Endothelial cell of umbilical vein (primary cell): ENCODE measurements at regions of chr16 and their contacts with region 1.

Region 1: DNA sequence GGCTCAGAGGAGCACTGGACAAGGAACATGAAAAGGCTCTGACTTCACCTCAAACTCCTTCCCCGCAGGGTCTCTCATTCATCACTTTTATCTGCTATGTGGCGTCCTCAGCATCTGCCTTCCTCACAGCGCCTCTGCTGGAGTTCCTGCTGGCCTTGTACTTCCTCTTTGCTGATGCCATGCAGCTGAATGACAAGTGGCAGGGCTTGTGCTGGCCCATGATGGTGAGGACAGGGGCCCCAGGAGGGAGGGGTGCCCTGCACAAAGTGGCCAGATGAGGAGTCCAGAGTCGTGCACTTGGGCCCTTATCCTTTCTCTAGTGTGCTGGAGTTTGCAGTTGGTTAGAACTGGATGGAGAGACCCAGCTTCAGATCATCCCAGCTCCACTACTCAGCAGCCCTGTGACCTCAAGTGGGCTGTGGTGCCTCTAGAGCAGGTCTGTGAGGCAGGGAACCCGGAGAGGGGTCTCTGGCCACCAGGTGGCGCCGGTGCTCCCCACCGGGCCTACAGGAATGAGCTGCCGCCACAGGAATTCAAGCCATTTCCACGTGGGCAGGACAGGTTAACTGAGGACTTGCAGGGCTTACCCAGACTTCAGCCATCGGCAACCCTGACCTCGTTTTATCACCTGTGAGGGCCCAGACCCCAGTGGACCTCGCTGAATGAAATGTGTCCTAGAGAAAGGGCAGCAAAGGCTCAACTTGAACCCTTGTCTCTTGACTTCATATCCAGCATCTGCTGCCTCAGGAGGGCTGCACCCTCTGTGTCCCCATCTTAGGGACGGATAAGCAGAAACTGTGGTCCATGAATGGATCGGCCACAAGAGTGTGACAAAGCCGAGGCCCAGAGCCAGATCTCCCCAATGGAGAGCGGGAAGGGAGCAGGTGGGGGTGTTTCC is 4.0 kb downstream of the CMTM3 start:
- DNase-seq: peak; percentile 77
- H3K4me3 ChIP-seq: no peak overlapping the region
- H3K27ac ChIP-seq: peak overlapping the region; percentile 28
- H3K4me1 ChIP-seq: peaks cover 17% of the 10 kb centered on the region
- H3K27me3 ChIP-seq: no peaks in the 10 kb centered on the region
- CTCF ChIP-seq: peak; percentile 99
- POLR2A ChIP-seq: no peak

Region 2: DNA sequence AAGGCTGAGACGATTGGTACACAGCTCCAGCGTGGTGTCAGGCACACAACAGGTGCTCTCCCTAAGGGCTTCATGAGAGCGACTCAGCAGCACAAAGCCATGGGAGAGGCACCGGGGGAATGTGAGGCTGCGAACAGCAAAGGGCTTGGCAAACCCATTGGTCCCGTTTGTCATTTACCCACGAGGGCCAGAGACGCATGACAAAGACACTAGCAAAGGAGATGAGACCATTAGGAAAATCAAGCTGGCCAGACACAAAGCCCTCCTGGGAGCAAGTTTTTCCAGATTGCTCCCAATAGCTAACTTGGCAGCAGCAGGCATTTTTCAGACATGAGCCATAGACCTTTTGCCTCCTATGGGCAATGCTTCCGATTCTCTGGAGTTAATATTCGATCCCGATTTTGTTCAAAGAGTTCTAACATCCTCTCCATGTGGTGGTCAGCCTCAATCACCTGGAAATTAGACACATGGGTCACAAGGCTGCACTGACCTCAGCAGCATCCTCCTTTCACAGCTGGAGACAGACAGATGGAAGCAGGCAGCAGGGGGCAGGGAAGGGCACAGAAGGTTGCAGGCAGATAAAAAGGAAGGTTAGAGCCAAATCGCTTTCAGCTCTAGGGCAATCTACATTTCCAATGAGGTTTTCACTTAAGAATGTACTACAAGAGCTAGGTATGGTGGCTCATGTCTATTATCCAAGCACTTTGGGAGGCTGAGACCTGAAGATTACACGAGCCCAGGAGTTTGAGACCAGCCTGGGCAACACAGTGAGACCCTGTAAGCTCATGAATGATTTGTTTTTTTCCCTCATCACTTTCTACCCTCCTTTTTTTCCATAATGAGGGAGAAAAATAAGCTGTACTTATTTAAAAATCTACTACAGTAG is 96.6 kb before region 1 on chr16:
- CTCF ChIA-PET with region 1: interaction called, 14 read pairs
- POLR2A ChIA-PET with region 1: no interaction called
- dilution Hi-C with region 1: no loop called
- intact Hi-C with region 1: loop called (anchors 1 kb)
- DNase-seq: peak; percentile 70
- H3K4me3 ChIP-seq: no peak overlapping the region
- H3K27ac ChIP-seq: peak overlapping the region; percentile 86
- H3K4me1 ChIP-seq: peaks cover 58% of the 10 kb centered on the region
- H3K27me3 ChIP-seq: no peaks in the 10 kb centered on the region
- CTCF ChIP-seq: no peak
- POLR2A ChIP-seq: no peak

Region 3: GRCh38 chr16:66562407-66562806 is 46.1 kb before region 1 on chr16:
- CTCF ChIA-PET with region 1: interaction called, 15 read pairs
- POLR2A ChIA-PET with region 1: no interaction called
- dilution Hi-C with region 1: no loop called
- intact Hi-C with region 1: loop called (anchors 1 kb)
- DNase-seq: no peak
- H3K4me3 ChIP-seq: no peak overlapping the region
- H3K27ac ChIP-seq: no peak overlapping the region
- H3K4me1 ChIP-seq: peaks cover 19% of the 10 kb centered on the region
- H3K27me3 ChIP-seq: no peaks in the 10 kb centered on the region
- CTCF ChIP-seq: no peak
- POLR2A ChIP-seq: no peak

Region 4: DNA sequence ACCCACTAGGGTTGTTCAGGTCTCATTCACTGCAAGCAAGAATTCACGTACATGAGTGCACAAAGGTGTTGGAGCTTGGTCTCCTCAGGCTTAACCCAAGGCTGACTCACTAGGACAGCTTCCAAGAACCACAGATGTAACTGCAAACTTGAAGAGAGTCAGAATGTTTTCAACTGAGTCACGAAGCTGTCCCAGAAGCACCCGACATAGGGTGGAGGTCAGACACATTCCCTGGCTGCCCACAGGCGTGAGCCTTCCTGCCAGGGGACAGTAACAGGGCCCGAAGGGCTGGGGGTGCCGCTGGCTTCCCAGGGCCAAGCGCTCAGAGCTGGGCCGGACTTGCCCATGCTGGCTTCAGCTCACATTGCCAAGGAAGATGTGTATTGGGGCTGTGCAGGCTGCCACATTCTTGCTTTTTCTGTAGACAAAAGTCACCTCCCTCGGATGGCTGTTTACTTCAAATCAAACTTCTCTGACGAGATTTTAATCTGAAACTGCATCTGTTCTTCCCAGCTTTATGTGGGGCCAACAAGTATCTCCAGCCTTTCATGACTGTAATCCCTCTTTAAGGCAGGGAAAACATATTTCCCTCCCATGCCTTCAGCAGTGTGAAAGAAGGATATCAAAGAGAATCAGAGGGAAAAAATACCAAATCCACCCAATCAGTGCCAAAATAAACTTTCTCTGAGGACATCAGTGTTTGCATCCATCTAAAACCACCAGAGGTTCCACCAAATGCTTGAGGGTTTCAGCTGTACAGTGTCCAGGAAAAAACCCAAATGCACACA is 10.3 kb after region 1 on chr16:
- CTCF ChIA-PET with region 1: interaction called, 52 read pairs
- POLR2A ChIA-PET with region 1: no interaction called
- dilution Hi-C with region 1: no loop called
- intact Hi-C with region 1: no loop called
- DNase-seq: peak; percentile 71
- H3K4me3 ChIP-seq: no peak overlapping the region
- H3K27ac ChIP-seq: peak overlapping the region; percentile 19
- H3K4me1 ChIP-seq: peaks cover 20% of the 10 kb centered on the region
- H3K27me3 ChIP-seq: no peaks in the 10 kb centered on the region
- CTCF ChIP-seq: no peak
- POLR2A ChIP-seq: no peak

Region 5: DNA sequence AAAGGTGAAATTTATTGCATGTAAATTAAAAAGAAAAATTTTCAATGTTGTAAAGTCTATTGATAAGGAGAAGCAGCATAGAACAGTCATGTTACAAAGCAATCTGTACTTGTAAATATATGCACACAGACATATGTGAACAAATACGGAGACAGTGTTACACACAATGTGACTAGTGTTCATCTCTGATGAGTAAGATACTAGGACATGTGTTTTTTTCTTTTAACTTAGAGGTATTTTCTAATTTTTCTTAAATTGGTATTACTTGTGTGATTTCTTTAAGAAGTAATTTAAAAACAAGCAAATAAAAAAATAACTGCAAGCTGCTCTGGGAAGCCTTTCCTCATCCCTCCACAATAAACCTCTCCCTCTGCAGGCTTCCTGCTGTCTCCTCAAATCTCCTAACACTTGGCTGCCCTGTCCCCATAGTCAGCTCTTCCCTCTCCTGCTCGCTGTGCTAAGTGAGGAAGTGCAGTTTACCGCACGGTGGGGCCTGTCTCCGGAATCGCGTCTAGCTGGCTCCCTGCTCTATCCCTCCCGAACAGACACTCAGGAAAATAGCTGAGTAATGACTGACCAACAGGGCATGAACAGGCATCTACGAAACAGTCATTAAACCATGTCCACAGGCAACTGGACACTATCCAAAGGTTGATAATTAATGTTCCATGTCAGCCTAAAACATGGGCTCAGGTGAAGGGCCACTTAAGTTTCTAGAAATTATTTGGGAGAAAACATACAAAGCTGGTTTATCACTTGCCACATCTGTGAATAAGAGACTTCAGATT is 52.1 kb after region 1 on chr16:
- CTCF ChIA-PET with region 1: interaction called, 59 read pairs
- POLR2A ChIA-PET with region 1: no interaction called
- dilution Hi-C with region 1: no loop called
- intact Hi-C with region 1: loop called (anchors 5 kb)
- DNase-seq: peak; percentile 90
- H3K4me3 ChIP-seq: no peak overlapping the region
- H3K27ac ChIP-seq: peak overlapping the region; percentile 49
- H3K4me1 ChIP-seq: peaks cover 25% of the 10 kb centered on the region
- H3K27me3 ChIP-seq: no peaks in the 10 kb centered on the region
- CTCF ChIP-seq: peak in 1 of 2 donors; percentile 25
- POLR2A ChIP-seq: no peak

Region 6: DNA sequence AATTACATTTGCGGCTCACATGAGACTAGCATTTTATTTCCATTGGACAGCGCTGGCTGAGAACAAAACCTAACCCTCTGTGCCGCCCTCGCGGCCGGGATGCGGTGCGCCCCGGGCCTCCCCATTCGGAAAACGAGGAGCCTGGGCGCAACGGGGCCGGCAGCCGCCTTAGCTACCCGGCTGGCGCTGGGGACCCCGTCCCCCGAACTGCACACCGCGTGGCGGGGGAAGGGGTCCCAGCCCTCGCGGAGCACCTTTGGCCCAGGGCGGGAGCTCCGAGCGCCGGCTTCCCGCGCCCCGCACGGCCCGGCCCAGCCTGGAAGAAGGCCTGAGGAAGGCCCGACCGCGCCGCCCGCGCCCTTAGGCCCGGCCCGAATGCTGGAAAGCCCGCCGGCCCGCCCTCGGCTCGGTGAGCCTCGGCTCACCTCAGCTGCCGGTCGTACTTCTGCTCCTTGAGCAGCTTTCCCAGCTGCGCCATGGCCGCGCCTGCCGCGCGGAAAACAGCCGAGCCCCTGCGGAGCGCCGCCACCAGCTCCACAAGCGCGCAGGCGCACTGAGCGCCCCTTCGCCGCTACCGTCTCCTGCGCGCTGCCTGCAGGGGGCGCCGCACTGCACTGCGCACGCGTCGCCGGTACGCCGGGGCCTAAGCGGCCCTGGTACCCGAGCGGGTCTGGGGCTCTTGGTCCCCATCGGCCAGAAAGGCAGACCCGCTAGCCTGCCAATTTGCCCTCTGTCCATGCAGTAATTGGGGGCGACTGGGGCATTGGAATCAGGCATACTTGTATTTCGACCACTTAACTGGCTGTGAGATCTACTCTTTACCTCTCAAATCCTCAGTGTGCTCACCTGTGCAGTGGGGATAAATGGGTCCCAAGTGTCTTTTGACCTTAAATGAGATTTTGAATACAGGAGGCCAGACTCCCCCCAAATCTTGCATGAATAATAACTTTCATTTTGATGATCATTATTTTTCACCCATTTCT is 222.2 kb after region 1 on chr16 and contains the start of gene NAE1:
- CTCF ChIA-PET with region 1: interaction called, 15 read pairs
- POLR2A ChIA-PET with region 1: no interaction called
- dilution Hi-C with region 1: no loop called
- intact Hi-C with region 1: no loop called
- DNase-seq: peak; percentile 91
- H3K4me3 ChIP-seq: peak within 1 kb of the TSS; percentile 64 to 90 (median 88)
- H3K27ac ChIP-seq: peak within 1 kb of the TSS; percentile 38
- H3K4me1 ChIP-seq: peaks cover 8% of the 10 kb centered on the region
- H3K27me3 ChIP-seq: peaks cover 2 to 15% of the 10 kb centered on the region in 2 experiments
- CTCF ChIP-seq: peak; percentile 99
- POLR2A ChIP-seq: peak; percentile 91
- total RNA-seq, gene NAE1: 64.3 and 67.6 TPM in 2 replicates